AG04450 (cell line): ENCODE measurements at regions of chrX and their contacts with region 1.

Region 1: DNA sequence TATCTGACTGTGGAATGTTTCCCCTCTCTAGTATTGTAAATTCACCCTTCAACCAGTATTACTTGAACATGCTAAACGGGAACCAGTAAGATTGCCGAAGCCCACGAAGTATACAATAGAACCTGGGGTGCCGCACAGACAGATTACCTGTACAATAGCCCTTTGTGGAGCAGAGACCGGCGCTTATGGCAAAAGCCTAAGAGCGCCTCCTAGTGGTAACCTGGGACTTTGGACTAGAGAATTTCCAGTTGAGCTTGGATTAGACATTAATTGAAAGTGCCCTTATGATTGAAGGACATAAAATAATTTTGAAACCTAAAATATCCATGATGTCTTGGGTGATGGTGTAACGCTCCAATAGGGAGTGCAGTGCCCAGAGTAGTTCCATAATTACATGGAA is 14.1 kb downstream of the ZNF157 start:
- DNase-seq: peak; percentile 3
- H3K4me3 ChIP-seq: no peak overlapping the region
- H3K27ac ChIP-seq: no peak overlapping the region
- H3K27me3 ChIP-seq: peaks cover 2% of the 10 kb centered on the region
- CTCF ChIP-seq: peak; percentile 69

Region 2: DNA sequence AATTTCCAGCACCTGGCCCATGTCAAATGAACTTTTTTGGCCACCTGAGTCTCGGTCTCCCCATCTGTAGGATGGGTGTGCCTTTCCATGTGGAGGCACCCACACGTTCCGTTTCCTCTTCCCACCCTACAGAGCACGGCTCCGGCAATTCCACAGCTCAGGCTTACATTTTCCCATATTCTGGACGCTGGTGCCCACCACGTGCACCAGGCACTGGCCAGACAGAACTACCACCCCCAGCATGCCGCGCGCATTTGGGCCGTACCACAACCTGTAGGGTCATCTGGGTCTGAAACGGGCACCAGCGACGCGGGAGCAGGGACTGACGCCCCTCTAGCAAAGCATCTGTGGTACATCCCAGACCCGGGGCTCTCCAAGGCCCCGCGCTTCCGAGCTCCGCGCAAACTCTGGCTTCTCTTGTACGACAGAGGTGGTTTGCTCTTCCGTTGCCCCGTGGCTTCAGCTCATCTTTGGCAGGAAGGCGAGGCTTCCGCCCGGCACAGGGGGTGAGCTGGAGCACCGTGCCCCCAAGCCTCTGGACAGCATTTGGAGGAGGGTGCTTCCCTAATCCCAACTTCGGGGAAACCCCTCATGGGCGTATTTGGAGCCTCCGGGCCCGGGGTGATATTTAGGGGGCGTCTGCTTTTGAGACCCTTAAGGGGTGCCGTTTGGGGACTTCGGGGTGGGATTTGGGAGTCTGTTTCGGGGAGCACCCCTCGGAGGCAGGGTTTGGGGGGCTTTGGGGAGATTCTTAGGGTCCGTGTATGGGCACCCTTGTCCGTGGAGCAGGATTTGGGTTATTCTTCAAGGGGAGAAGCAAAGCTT is 193.8 kb before region 1 on chrX:
- CTCF ChIA-PET with region 1: interaction called, 14 read pairs
- POLR2A ChIA-PET with region 1: interaction called, 7 read pairs
- DNase-seq: peak; percentile 80
- H3K4me3 ChIP-seq: peak overlapping the region; percentile 66
- H3K27ac ChIP-seq: peak overlapping the region; percentile 31
- H3K27me3 ChIP-seq: no peaks in the 10 kb centered on the region
- CTCF ChIP-seq: no peak

Region 3: GRCh38 chrX:47523297-47523696 is 138.8 kb after region 1 on chrX:
- CTCF ChIA-PET with region 1: interaction called, 10 read pairs
- POLR2A ChIA-PET with region 1: no interaction called
- DNase-seq: peak; percentile 29
- H3K4me3 ChIP-seq: peak overlapping the region; percentile 59
- H3K27ac ChIP-seq: no peak overlapping the region
- H3K27me3 ChIP-seq: no peaks in the 10 kb centered on the region
- CTCF ChIP-seq: peak; percentile 72